IMR-90 (cell line): ENCODE measurements at regions of chr13 and their contacts with region 1.

Region 1: DNA sequence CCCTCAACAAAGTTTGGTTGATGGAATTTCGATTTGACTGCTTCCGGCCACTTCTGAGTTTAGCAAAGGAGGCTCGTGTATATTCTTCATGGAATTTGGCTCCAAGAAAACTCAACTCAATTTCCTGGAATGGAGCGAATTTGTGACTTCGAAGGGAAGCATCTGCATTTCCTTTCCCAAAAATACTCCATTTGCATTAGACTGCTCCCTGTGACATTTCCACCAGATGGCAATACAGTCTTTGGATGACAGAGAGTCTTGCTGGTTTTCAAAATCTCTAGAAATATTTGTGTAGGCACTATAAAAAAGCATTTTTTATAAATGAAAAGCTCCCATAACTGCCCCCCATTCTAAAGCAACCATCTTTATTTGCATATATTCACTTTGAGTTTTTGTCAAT is 4.1 kb downstream of the C1QTNF9 start:
- DNase-seq: peak; percentile 9
- ATAC-seq: peak; percentile 80
- H3K4me3 ChIP-seq: no peak overlapping the region
- H3K27ac ChIP-seq: no peak overlapping the region
- H3K4me1 ChIP-seq: no peaks in the 10 kb centered on the region
- H3K27me3 ChIP-seq: peaks cover 2% of the 10 kb centered on the region
- CTCF ChIP-seq: peak; percentile 50
- POLR2A ChIP-seq: no peak
- RAD21 ChIP-seq: peak; percentile 56

Region 2: GRCh38 chr13:24348797-24349515 is 35.5 kb after region 1 on chr13:
- CTCF ChIA-PET with region 1: no interaction called
- POLR2A ChIA-PET with region 1: no interaction called
- dilution Hi-C with region 1: no loop called
- in situ Hi-C with region 1: no loop called
- intact Hi-C with region 1: no loop called
- DNase-seq: no peak
- ATAC-seq: no peak
- H3K4me3 ChIP-seq: no peak overlapping the region
- H3K27ac ChIP-seq: no peak overlapping the region
- H3K4me1 ChIP-seq: no peaks in the 10 kb centered on the region
- H3K27me3 ChIP-seq: peaks cover 6% of the 10 kb centered on the region; the same call in 1 of the 2 replicates
- CTCF ChIP-seq: no peak
- POLR2A ChIP-seq: no peak
- RAD21 ChIP-seq: no peak

Region 3: GRCh38 chr13:24557081-24557480 is 243.6 kb after region 1 on chr13:
- CTCF ChIA-PET with region 1: no interaction called
- POLR2A ChIA-PET with region 1: no interaction called
- dilution Hi-C with region 1: no loop called
- in situ Hi-C with region 1: no loop called
- intact Hi-C with region 1: loop called (anchors 1 kb)
- DNase-seq: no peak
- ATAC-seq: no peak
- H3K4me3 ChIP-seq: no peak overlapping the region
- H3K27ac ChIP-seq: no peak overlapping the region
- H3K4me1 ChIP-seq: no peaks in the 10 kb centered on the region
- H3K27me3 ChIP-seq: peaks cover 1% of the 10 kb centered on the region; the same call in 1 of the 2 replicates
- CTCF ChIP-seq: no peak
- POLR2A ChIP-seq: no peak
- RAD21 ChIP-seq: no peak